ENCODE measurements at regions of chr2 and their contacts with region 1.

Region 1: GRCh38 chr2:219057709-219058540 is 2.8 kb downstream of the IHH start:
- DNase-seq: peak; percentile 74
- H3K4me3 ChIP-seq: no peak overlapping the region
- H3K27ac ChIP-seq: no peak overlapping the region
- H3K4me1 ChIP-seq: no peaks in the 10 kb centered on the region
- CTCF ChIP-seq: peak; percentile 84

Region 2: DNA sequence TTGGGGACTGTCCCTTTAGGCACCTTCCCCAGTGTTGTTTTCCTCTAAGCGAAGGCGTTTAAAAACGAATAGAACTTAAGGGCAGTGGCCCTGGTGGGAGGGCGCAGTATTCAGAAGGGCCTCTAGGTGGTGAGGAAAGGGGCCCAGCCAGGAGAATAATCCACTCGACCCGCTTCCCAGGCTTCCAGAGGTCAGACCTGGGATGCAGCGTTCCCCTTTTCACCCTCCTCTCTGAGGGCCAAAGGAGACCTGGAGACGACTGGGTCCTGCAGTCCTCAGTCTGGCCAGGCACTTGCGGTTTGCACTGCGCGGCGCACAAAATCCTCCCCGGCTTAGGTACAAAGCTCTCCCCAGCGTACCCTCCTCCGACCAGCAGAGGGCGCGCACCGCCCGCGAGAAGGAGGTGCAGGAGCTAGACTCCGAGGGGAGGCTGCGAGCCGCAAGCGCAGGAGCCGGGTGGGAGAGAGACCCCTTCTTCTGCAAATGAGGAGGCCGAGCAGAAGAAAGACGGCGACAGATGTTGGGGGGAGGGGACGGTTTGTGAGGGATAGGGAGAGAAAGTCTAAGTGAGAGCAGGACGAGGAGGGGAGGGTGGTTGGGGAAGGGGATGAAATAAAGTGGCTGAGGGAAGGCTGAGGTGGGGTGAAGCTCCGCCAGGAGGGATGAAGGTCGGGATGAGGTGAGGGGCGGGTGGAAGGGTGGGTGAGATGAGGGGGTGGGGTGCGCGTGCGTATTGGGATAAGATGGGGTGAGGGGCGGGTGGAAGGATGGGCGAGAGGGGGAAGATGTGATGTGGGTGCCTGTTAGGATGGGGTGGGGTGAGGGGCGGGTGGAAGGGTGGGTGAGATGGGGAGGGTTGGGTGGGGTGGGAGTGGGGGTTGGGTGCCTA is 77.8 kb before region 1 on chr2:
- CTCF ChIA-PET with region 1: no interaction called
- POLR2A ChIA-PET with region 1: no interaction called
- intact Hi-C with region 1: loop called (anchors 2 kb)
- DNase-seq: peak; percentile 74
- H3K4me3 ChIP-seq: peak overlapping the region; percentile 38
- H3K27ac ChIP-seq: no peak overlapping the region
- H3K4me1 ChIP-seq: no peaks in the 10 kb centered on the region
- CTCF ChIP-seq: peak; percentile 99

Region 3: GRCh38 chr2:219094171-219094570 is 36.2 kb after region 1 on chr2:
- CTCF ChIA-PET with region 1: no interaction called
- POLR2A ChIA-PET with region 1: no interaction called
- intact Hi-C with region 1: no loop called
- DNase-seq: no peak
- H3K4me3 ChIP-seq: no peak overlapping the region
- H3K27ac ChIP-seq: no peak overlapping the region
- H3K4me1 ChIP-seq: no peaks in the 10 kb centered on the region
- CTCF ChIP-seq: no peak

Region 4: GRCh38 chr2:219104107-219105035 is 46.4 kb after region 1 on chr2:
- CTCF ChIA-PET with region 1: no interaction called
- POLR2A ChIA-PET with region 1: no interaction called
- intact Hi-C with region 1: loop called (anchors 5 kb)
- DNase-seq: peak; percentile 49
- H3K4me3 ChIP-seq: no peak overlapping the region
- H3K27ac ChIP-seq: no peak overlapping the region
- H3K4me1 ChIP-seq: no peaks in the 10 kb centered on the region
- CTCF ChIP-seq: peak; percentile 86

Region 5: GRCh38 chr2:219119422-219120043 is 61.6 kb after region 1 on chr2:
- CTCF ChIA-PET with region 1: interaction called, 3 read pairs
- POLR2A ChIA-PET with region 1: no interaction called
- intact Hi-C with region 1: loop called (anchors 1 kb)
- DNase-seq: peak; percentile 62
- H3K4me3 ChIP-seq: no peak overlapping the region
- H3K27ac ChIP-seq: no peak overlapping the region
- H3K4me1 ChIP-seq: no peaks in the 10 kb centered on the region
- CTCF ChIP-seq: peak; percentile 92

Region 6: GRCh38 chr2:219155054-219155644 is 97.2 kb after region 1 on chr2:
- CTCF ChIA-PET with region 1: interaction called, 4 read pairs
- POLR2A ChIA-PET with region 1: no interaction called
- intact Hi-C with region 1: loop called (anchors 1 kb)
- DNase-seq: peak; percentile 84
- H3K4me3 ChIP-seq: no peak overlapping the region
- H3K27ac ChIP-seq: no peak overlapping the region
- H3K4me1 ChIP-seq: peaks cover 5% of the 10 kb centered on the region
- CTCF ChIP-seq: peak; percentile 82

Region 7: GRCh38 chr2:219294356-219295351 is 236.7 kb after region 1 on chr2:
- CTCF ChIA-PET with region 1: no interaction called
- POLR2A ChIA-PET with region 1: no interaction called
- intact Hi-C with region 1: loop called (anchors 2 kb)
- DNase-seq: peak; percentile 92
- H3K4me3 ChIP-seq: peak overlapping the region; percentile 64
- H3K27ac ChIP-seq: no peak overlapping the region
- H3K4me1 ChIP-seq: peaks cover 21% of the 10 kb centered on the region
- CTCF ChIP-seq: peak; percentile 97